ENCODE measurements at regions of chr2 and their contacts with region 1.

Region 1: GRCh38 chr2:127415593-127416505 is 2.4 kb upstream of the PROC start:
- DNase-seq: peak; percentile 84
- CTCF ChIP-seq: peak; percentile 70

Region 2: DNA sequence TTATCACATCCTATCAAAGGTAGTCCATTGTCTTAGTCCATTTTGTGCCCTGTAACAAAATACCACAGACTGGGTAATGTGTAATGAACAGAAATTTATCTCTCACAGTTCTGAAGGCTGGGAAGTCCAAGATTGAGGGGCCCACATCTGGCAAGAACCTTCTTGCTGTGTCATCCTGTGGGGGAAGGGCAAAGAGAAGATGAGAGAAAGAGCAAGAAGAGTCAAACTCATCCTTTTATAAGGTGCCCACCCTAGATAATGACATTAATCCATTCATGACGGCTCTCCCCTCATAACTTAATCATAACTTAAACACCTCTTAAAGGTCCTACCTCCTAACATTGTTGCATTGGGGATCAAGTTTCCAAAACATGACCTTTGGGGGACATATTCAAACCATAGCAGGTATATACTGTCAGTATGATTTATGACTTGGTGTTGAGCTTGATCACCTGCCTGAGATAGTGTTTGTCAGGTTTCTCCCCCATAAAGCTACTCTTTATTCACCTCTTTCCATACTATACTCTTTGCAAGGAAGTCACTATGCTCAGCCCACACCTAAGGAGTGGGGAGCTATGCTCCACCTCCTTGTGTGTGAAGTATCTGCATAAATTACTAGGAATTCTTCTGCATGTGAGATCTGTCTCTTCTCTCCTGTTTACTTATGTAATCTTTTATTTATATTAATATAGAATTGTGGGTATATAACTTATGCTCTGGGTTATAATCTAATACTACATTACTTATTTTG is 22.8 kb before region 1 on chr2:
- CTCF ChIA-PET with region 1: interaction called, 12 read pairs
- POLR2A ChIA-PET with region 1: no interaction called
- DNase-seq: no peak
- CTCF ChIP-seq: no peak

Region 3: DNA sequence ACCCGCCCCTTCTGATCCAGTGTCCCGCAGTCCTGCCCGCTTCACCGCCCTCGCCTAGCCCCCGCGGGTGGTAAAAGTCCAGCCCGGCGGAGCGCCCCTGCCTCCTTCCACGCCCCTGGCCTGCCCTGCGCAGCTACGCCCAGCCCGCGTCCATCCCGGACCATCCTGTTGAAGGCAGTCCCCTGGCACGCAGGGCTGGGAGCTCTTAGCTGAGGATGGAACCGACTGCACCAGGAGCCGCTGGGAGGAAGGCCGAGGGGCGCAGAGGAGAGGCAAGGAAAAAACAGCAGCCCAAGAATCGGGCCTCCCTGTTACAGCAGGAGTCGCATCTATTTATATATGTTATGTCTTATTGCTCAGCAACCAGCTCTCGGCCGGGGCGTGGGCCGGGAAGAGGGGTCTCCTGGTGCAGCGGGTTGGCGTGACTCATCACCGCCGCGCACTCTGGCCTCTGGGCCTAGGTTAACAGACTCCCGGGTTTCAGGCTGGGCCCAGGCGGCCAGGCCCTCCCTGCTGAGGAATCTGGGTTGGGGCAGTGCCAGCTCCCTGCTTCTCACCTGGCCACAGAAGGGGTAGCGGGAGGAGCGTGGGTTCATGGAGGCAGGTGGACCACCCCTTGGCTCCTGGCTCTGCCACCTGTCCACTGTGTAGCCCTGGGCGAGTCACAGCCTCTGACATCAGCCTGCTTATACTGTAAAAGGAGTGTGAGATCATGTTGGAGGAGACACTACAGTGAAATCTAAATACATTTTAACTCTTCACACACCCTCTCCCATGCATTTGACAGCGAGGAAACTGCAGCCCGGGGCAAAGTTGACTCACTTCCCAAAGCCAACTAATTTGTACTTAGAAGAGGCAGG is 14.7 kb before region 1 on chr2:
- CTCF ChIA-PET with region 1: interaction called, 12 read pairs
- POLR2A ChIA-PET with region 1: no interaction called
- DNase-seq: no peak
- CTCF ChIP-seq: no peak

Measured in GM10248 (cell line).